Activated B cell treated with CpG ODN at 0.5 μM for 24 hours (primary cell): ENCODE measurements at regions of chr10 and their contacts with region 1.

Region 1: GRCh38 chr10:28302638-28303488 is at the start of gene MPP7:
- DNase-seq: peak; percentile 96
- ATAC-seq: peak; percentile 91
- H3K4me3 Mint-ChIP-seq: peak within 1 kb of the TSS; percentile 91
- H3K27ac Mint-ChIP-seq: peak within 1 kb of the TSS; percentile 73
- H3K4me1 Mint-ChIP-seq: peaks cover 30% of the 10 kb centered on the region
- H3K27me3 Mint-ChIP-seq: peaks cover 35% of the 10 kb centered on the region
- CTCF ChIP-seq: no peak
- total RNA-seq, gene MPP7: 6.2 and 8.3 TPM in 2 replicates

Region 2: GRCh38 chr10:27504007-27504807 is 798.7 kb before region 1 on chr10 and contains the start of gene RAB18:
- CTCF ChIA-PET with region 1: no interaction called
- POLR2A ChIA-PET with region 1: interaction called, 6 read pairs
- intact Hi-C with region 1: loop called (anchors 1 kb)
- DNase-seq: peak; percentile 93
- ATAC-seq: peak; percentile 96
- H3K4me3 Mint-ChIP-seq: peak within 1 kb of the TSS; percentile 100
- H3K27ac Mint-ChIP-seq: peak within 1 kb of the TSS; percentile 99
- H3K4me1 Mint-ChIP-seq: peaks cover 41% of the 10 kb centered on the region
- H3K27me3 Mint-ChIP-seq: no peaks in the 10 kb centered on the region
- CTCF ChIP-seq: no peak
- total RNA-seq, gene RAB18: 48.3 and 55.6 TPM in 2 replicates

Region 3: GRCh38 chr10:28250782-28251181 is 52.1 kb before region 1 on chr10:
- CTCF ChIA-PET with region 1: interaction called, 20 read pairs
- POLR2A ChIA-PET with region 1: interaction called, 6 read pairs
- intact Hi-C with region 1: loop called (anchors 1 kb)
- DNase-seq: no peak
- ATAC-seq: no peak
- H3K4me3 Mint-ChIP-seq: no peak overlapping the region
- H3K27ac Mint-ChIP-seq: no peak overlapping the region
- H3K4me1 Mint-ChIP-seq: no peaks in the 10 kb centered on the region
- H3K27me3 Mint-ChIP-seq: peaks cover 2% of the 10 kb centered on the region
- CTCF ChIP-seq: no peak

Region 4: GRCh38 chr10:28367929-28368484 is 65.1 kb after region 1 on chr10:
- CTCF ChIA-PET with region 1: interaction called, 13 read pairs
- POLR2A ChIA-PET with region 1: interaction called, 13 read pairs
- intact Hi-C with region 1: loop called (anchors 1 kb)
- DNase-seq: peak; percentile 20
- ATAC-seq: peak; percentile 98
- H3K4me3 Mint-ChIP-seq: peak overlapping the region; percentile 70
- H3K27ac Mint-ChIP-seq: peak overlapping the region; percentile 95
- H3K4me1 Mint-ChIP-seq: peaks cover 41% of the 10 kb centered on the region
- H3K27me3 Mint-ChIP-seq: no peaks in the 10 kb centered on the region
- CTCF ChIP-seq: no peak

Region 5: DNA sequence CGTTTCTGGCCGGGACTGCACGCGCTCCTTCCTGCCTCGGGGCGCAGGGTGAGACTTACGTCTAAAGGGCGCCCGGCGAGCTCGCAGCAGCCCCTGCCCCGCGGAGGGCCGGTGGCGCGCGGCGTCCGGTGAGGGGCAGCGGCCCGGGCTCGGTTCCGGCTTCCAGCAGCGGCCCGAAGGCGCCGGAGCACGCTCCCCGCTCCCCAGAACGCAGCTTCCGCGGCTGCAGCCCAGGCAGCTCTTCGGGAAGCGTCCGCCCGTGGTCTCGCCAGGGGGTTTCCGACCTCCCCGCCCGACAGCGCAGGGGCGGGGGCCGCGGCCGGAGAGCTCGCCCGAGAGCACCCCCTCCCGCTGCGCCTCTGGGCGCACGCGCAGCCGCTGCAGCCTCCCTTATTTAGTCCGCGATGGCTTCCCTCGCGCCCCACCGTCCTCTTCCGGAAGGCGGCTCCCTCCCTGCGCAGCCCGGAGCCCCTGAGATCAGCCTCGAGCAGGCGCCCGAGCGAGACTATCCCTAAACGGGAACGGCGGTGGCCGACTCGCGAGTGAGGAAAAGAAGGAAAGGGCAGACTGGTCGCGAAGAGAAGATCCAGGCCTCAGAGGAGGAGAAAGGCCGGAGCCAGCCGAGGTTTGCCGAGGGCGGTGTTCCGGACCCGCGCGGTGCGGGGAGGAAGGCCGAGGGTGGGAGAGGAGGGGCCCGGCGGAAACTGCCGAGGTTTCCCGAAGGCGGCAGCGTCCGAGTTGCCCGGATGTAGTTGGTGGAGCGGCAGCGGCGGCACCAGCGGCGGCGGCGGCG is 229.7 kb after region 1 on chr10 and contains the start of gene WAC:
- CTCF ChIA-PET with region 1: no interaction called
- POLR2A ChIA-PET with region 1: interaction called, 9 read pairs
- intact Hi-C with region 1: loop called (anchors 1 kb)
- DNase-seq: peak; percentile 97
- ATAC-seq: peak; percentile 79
- H3K4me3 Mint-ChIP-seq: peak within 1 kb of the TSS; percentile 99
- H3K27ac Mint-ChIP-seq: peak within 1 kb of the TSS; percentile 100
- H3K4me1 Mint-ChIP-seq: peaks cover 63% of the 10 kb centered on the region
- H3K27me3 Mint-ChIP-seq: no peaks in the 10 kb centered on the region
- CTCF ChIP-seq: no peak
- total RNA-seq, gene WAC: 145 and 159 TPM in 2 replicates